IMR-90 (cell line): ENCODE measurements at regions of chr2 and their contacts with region 1.

Region 1: GRCh38 chr2:42777883-42778805 is 14.2 kb upstream of the OXER1 start:
- DNase-seq: peak; percentile 22
- ATAC-seq: peak; percentile 68
- H3K4me3 ChIP-seq: no peak overlapping the region
- H3K27ac ChIP-seq: no peak overlapping the region
- H3K4me1 ChIP-seq: 0 out of 2 replicates have a peak, but pooled peaks cover 2% of the 10 kb centered on the region
- H3K27me3 ChIP-seq: peaks cover 5% of the 10 kb centered on the region
- CTCF ChIP-seq: no peak
- POLR2A ChIP-seq: no peak
- RAD21 ChIP-seq: no peak

Region 2: GRCh38 chr2:42296226-42296625 is 481.9 kb before region 1 on chr2:
- CTCF ChIA-PET with region 1: interaction called, 11 read pairs
- POLR2A ChIA-PET with region 1: no interaction called
- dilution Hi-C with region 1: no loop called
- in situ Hi-C with region 1: no loop called
- intact Hi-C with region 1: no loop called
- DNase-seq: no peak
- ATAC-seq: no peak
- H3K4me3 ChIP-seq: no peak overlapping the region
- H3K27ac ChIP-seq: no peak overlapping the region
- H3K4me1 ChIP-seq: peaks cover 2% of the 10 kb centered on the region; the same call in 1 of the 2 replicates
- H3K27me3 ChIP-seq: no peaks in the 10 kb centered on the region
- CTCF ChIP-seq: no peak
- POLR2A ChIP-seq: no peak
- RAD21 ChIP-seq: no peak

Region 3: GRCh38 chr2:42964439-42965083 is 186.4 kb after region 1 on chr2:
- CTCF ChIA-PET with region 1: no interaction called
- POLR2A ChIA-PET with region 1: no interaction called
- dilution Hi-C with region 1: no loop called
- in situ Hi-C with region 1: no loop called
- intact Hi-C with region 1: no loop called
- DNase-seq: peak; percentile 98
- ATAC-seq: peak; percentile 83
- H3K4me3 ChIP-seq: no peak overlapping the region
- H3K27ac ChIP-seq: peak overlapping the region; percentile 69
- H3K4me1 ChIP-seq: peaks cover 44% of the 10 kb centered on the region
- H3K27me3 ChIP-seq: no peaks in the 10 kb centered on the region
- CTCF ChIP-seq: no peak
- POLR2A ChIP-seq: no peak
- RAD21 ChIP-seq: no peak